PC-3 (cell line): ENCODE measurements at regions of chr1 and their contacts with region 1.

Region 1: DNA sequence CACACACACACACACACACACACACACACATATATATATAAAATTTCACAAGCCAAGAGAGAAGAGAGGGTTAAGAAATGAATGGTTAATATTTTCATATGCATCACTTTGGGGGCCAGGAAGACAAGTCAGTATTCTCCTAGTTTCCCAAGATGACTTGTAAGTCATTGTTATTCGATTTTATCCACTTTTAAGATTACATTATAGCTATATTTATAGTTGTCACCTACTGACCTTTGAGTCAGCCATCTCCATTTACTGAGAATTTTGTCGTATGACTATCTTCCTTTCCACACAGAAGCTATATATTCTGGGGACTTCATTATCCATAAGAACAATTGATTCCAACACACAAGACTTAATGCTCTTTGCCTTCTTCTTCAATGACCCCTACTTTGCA is 8.9 kb downstream of the LYST start:
- DNase-seq: no peak
- ATAC-seq: no peak
- H3K4me3 ChIP-seq: no peak overlapping the region
- H3K27ac ChIP-seq: no peak overlapping the region
- H3K4me1 ChIP-seq: peaks cover 1% of the 10 kb centered on the region
- H3K27me3 ChIP-seq: no peaks in the 10 kb centered on the region
- CTCF ChIP-seq: no peak

Region 2: GRCh38 chr1:235411489-235412138 is 446.1 kb before region 1 on chr1:
- CTCF ChIA-PET with region 1: no interaction called
- POLR2A ChIA-PET with region 1: no interaction called
- intact Hi-C with region 1: no loop called
- DNase-seq: no peak
- ATAC-seq: no peak
- H3K4me3 ChIP-seq: no peak overlapping the region
- H3K27ac ChIP-seq: no peak overlapping the region
- H3K4me1 ChIP-seq: peaks cover 2% of the 10 kb centered on the region; the same call in 1 of the 2 replicates
- H3K27me3 ChIP-seq: no peaks in the 10 kb centered on the region
- CTCF ChIP-seq: no peak

Region 3: DNA sequence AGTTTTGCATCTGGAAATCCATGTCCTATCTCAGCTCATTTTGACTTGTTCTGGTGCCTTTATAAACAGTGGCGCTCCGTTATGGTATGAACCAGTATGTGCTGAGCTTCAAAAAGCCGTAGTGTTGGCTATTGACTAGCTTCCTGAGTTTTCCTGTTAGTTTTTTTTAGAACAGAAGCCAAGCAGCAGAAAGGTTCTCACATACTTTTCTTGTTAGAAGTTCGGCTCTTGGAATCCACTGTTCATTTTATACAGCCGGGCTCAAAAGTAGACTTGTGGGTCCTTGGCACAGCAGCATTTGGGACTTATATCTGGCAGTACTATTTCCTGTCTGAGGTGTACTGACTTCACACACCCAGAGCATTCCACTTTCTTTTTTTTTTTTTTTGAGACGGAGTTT is 426.8 kb before region 1 on chr1:
- CTCF ChIA-PET with region 1: no interaction called
- POLR2A ChIA-PET with region 1: no interaction called
- intact Hi-C with region 1: no loop called
- DNase-seq: no peak
- ATAC-seq: no peak
- H3K4me3 ChIP-seq: no peak overlapping the region
- H3K27ac ChIP-seq: no peak overlapping the region
- H3K4me1 ChIP-seq: 0 out of 2 replicates have a peak, but pooled peaks cover 4% of the 10 kb centered on the region
- H3K27me3 ChIP-seq: no peaks in the 10 kb centered on the region
- CTCF ChIP-seq: no peak

Region 4: GRCh38 chr1:235902638-235903542 is 45.1 kb after region 1 on chr1:
- CTCF ChIA-PET with region 1: no interaction called
- POLR2A ChIA-PET with region 1: interaction called, 11 read pairs
- intact Hi-C with region 1: no loop called
- DNase-seq: peak; percentile 90
- ATAC-seq: peak; percentile 96
- H3K4me3 ChIP-seq: no peak overlapping the region
- H3K27ac ChIP-seq: peak overlapping the region; percentile 73
- H3K4me1 ChIP-seq: peaks cover 14% of the 10 kb centered on the region
- H3K27me3 ChIP-seq: no peaks in the 10 kb centered on the region
- CTCF ChIP-seq: no peak